Endothelial cell of umbilical vein (primary cell): ENCODE measurements at regions of chr10 and their contacts with region 1.

Region 1: GRCh38 chr10:45594276-45595106 is 78.1 kb downstream of the ZFAND4 start:
- DNase-seq: peak; percentile 92
- H3K4me3 ChIP-seq: peak overlapping the region; percentile 54 to 99 (median 80)
- H3K27ac ChIP-seq: peak overlapping the region; percentile 16
- H3K4me1 ChIP-seq: peaks cover 11% of the 10 kb centered on the region
- H3K27me3 ChIP-seq: peaks cover under 1 to 5% of the 10 kb centered on the region in 2 experiments
- CTCF ChIP-seq: no peak
- POLR2A ChIP-seq: peak; percentile 67

Region 2: DNA sequence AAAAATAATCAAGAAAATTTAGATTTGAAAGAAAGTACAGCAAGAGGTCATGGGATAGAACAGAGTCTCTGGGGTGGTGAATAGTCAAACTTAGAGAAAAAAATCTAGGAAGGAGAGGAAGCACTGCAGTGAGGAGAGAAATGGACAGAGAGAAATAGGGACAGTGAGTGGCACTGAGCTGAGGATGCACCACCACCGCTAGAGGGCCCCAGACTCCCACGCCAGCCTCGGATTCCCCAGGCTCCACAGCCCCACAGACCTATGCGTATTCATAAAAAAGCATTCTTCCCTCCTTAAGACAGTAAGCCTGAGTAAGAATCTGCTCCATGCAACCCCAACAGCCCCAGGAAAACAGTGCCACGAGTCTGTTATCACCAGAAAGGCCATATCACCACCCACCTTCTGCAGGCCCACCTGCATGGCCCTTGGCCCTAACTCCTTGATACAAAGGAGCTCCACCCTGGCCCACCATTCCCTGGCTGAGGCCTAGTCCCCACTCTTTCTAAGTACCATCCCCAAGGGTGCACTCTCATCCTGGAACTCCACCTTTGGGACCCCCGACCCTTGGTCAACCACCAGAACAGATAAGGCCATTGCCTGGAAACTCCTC is 129.4 kb before region 1 on chr10:
- CTCF ChIA-PET with region 1: interaction called, 15 read pairs
- POLR2A ChIA-PET with region 1: no interaction called
- dilution Hi-C with region 1: no loop called
- intact Hi-C with region 1: loop called (anchors 1 kb)
- DNase-seq: peak; percentile 67
- H3K4me3 ChIP-seq: no peak overlapping the region
- H3K27ac ChIP-seq: no peak overlapping the region
- H3K4me1 ChIP-seq: peaks cover 3% of the 10 kb centered on the region
- H3K27me3 ChIP-seq: no peaks in the 10 kb centered on the region
- CTCF ChIP-seq: peak; percentile 92 to 98
- POLR2A ChIP-seq: no peak

Region 3: DNA sequence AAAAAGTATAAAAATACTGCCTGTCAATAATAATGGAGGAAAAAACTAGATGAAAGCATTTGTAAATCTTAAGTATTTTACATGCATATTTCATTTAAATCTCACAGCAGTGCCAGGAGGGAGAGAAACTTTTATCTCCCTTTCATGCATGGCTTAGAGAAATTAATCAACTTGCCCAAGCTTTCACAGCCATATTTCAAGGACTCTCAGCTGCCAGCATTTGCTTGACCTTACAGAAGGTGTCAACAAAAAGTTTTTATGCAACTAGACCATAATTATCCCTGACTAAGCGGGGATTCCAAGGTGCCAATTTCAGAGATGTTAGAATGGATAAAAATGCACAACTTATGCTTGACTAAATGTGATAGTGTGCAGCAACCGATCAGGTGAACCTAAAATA is 47.3 kb before region 1 on chr10:
- CTCF ChIA-PET with region 1: no interaction called
- POLR2A ChIA-PET with region 1: no interaction called
- dilution Hi-C with region 1: no loop called
- intact Hi-C with region 1: no loop called
- DNase-seq: no peak
- H3K4me3 ChIP-seq: no peak overlapping the region
- H3K27ac ChIP-seq: no peak overlapping the region
- H3K4me1 ChIP-seq: peaks cover 16% of the 10 kb centered on the region
- H3K27me3 ChIP-seq: no peaks in the 10 kb centered on the region
- CTCF ChIP-seq: no peak
- POLR2A ChIP-seq: no peak

Region 4: GRCh38 chr10:45557275-45557905 is 37.1 kb before region 1 on chr10:
- CTCF ChIA-PET with region 1: no interaction called
- POLR2A ChIA-PET with region 1: no interaction called
- dilution Hi-C with region 1: no loop called
- intact Hi-C with region 1: loop called (anchors 1 kb)
- DNase-seq: peak; percentile 93
- H3K4me3 ChIP-seq: no peak overlapping the region
- H3K27ac ChIP-seq: peak overlapping the region; percentile 47
- H3K4me1 ChIP-seq: peaks cover 26% of the 10 kb centered on the region
- H3K27me3 ChIP-seq: no peaks in the 10 kb centered on the region
- CTCF ChIP-seq: no peak
- POLR2A ChIP-seq: no peak

Region 5: DNA sequence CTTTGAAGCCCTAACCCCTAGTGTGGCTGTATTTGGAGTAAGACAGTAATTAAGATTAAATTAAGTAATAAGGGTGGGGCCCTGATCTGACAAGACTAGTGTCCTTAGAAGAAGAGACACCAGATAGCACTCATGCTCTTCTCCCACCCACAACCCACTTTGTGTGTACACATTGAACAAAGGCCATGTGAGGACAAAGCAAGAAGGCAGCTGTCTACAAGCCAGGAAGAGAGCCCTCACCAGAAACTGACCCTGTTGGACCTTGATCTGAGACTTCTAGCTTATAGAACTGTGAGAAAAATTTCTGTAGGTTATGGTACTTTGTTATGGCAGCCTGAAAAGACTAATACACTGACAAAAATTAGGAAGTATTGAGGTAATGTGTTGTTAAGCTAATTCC is 18.2 kb after region 1 on chr10:
- CTCF ChIA-PET with region 1: no interaction called
- POLR2A ChIA-PET with region 1: no interaction called
- dilution Hi-C with region 1: no loop called
- intact Hi-C with region 1: loop called (anchors 2 kb)
- DNase-seq: no peak
- H3K4me3 ChIP-seq: no peak overlapping the region
- H3K27ac ChIP-seq: no peak overlapping the region
- H3K4me1 ChIP-seq: no peaks in the 10 kb centered on the region
- H3K27me3 ChIP-seq: no peaks in the 10 kb centered on the region
- CTCF ChIP-seq: no peak
- POLR2A ChIP-seq: no peak

Region 6: DNA sequence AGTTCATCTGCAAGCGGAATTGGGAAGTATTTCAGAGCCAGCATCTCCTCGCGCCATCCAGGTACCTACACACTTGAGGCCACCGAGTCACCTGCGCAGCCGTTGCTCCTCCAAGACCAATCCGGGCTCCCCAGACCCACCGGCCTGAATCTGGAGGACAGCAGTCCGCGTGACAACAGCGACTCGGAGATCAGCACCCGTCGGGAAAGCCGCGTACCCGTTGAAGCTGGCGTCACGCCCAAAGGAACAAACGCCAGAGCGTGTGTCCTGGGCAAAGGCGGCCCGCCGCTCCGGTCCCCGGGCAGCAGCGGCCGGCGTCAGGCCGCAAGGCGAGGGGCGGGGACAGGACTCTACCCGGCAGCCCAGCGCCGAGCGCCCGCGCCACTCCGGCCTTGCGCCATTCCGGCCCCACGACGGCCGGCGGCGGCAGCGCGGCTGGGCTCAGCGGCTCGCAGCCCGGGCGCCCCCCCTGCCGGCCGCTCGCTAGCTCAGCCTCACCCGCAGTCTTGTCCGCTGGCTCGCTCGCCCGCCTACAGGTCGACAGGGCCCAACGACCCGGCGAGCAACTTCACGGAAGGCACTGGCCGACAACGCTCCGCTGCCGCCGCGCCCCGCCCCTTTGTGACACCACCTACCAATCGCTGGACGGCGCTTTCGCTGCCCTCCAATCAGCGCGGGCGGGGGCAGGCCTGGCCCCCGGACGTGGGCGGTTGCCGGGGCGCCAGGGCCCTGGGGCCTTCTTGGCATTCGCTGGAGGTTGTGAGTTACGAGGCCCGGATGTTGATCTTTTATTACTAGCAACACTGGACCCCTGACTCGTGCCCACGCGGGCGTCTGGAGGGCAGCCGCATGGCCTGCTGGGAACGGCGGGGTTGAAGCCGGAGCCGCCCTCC is 77.9 kb after region 1 on chr10 and contains the start of gene ZFAND4:
- CTCF ChIA-PET with region 1: no interaction called
- POLR2A ChIA-PET with region 1: no interaction called
- dilution Hi-C with region 1: no loop called
- intact Hi-C with region 1: loop called (anchors 1 kb)
- DNase-seq: peak; percentile 97
- H3K4me3 ChIP-seq: peak within 1 kb of the TSS; percentile 33 to 78 (median 59)
- H3K27ac ChIP-seq: peak within 1 kb of the TSS; percentile 52
- H3K4me1 ChIP-seq: peaks cover 6% of the 10 kb centered on the region
- H3K27me3 ChIP-seq: no peaks in the 10 kb centered on the region
- CTCF ChIP-seq: peak; percentile 68 to 82
- POLR2A ChIP-seq: peak; percentile 55
- total RNA-seq, gene ZFAND4: 7.2 and 7.8 TPM in 2 replicates

Region 7: GRCh38 chr10:46030091-46030937 is 435.8 kb after region 1 on chr10 and contains the start of gene NCOA4:
- CTCF ChIA-PET with region 1: no interaction called
- POLR2A ChIA-PET with region 1: no interaction called
- dilution Hi-C with region 1: no loop called
- intact Hi-C with region 1: loop called (anchors 1 kb)
- DNase-seq: peak; percentile 98
- H3K4me3 ChIP-seq: peak within 1 kb of the TSS; percentile 75 to 94 (median 85)
- H3K27ac ChIP-seq: peak within 1 kb of the TSS; percentile 71
- H3K4me1 ChIP-seq: peaks cover 36% of the 10 kb centered on the region
- H3K27me3 ChIP-seq: no peaks in the 10 kb centered on the region
- CTCF ChIP-seq: peak; percentile 74 to 78
- POLR2A ChIP-seq: peak; percentile 97
- total RNA-seq, gene NCOA4: 119 and 127 TPM in 2 replicates